Activated naive CD8-positive, alpha-beta T cell treated with anti-CD3 and anti-CD28 coated beads, Interleukin-2, amount 10 ng/mL, durations not matched to agents 7 days and 5 days (primary cell): ENCODE measurements at regions of chr1 and their contacts with region 1.

Region 1: DNA sequence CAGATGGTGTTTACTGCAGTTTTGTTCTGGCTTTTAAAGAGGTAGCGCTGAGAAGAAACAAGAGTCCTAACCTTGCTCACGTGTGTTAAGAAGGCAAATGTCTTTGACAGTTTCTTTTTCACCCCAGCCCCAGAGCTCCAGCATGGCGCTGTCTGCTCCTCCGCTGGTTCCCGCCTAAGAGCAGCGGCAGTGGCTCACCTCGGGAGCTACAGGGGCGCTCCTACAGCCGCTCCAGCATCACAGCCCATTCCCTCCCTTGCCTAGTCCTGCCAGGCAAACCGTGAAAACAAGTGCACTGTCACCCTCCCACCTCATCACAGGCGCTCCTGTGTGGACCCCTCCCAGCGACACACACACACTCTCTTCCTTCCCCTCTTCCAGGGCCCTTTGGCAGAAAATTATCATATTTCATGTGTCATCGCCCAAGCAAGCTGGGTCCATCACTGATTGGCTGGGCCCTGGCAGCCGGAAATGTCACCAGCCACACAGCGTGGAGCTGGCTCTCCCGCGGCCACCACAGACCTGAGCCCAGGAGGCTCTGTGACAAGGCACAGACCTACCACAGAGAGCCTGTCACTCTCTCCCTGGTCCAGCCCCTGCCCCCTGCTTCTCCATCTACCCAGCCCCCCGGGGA is 1.2 kb upstream of the HIVEP3 start:
- DNase-seq: peak; percentile 84
- ATAC-seq: peak; percentile 96
- H3K4me3 Mint-ChIP-seq: peak overlapping the region; percentile 96
- H3K27ac Mint-ChIP-seq: peak overlapping the region; percentile 97
- H3K4me1 Mint-ChIP-seq: peaks cover 47% of the 10 kb centered on the region
- H3K27me3 Mint-ChIP-seq: no peaks in the 10 kb centered on the region

Region 2: DNA sequence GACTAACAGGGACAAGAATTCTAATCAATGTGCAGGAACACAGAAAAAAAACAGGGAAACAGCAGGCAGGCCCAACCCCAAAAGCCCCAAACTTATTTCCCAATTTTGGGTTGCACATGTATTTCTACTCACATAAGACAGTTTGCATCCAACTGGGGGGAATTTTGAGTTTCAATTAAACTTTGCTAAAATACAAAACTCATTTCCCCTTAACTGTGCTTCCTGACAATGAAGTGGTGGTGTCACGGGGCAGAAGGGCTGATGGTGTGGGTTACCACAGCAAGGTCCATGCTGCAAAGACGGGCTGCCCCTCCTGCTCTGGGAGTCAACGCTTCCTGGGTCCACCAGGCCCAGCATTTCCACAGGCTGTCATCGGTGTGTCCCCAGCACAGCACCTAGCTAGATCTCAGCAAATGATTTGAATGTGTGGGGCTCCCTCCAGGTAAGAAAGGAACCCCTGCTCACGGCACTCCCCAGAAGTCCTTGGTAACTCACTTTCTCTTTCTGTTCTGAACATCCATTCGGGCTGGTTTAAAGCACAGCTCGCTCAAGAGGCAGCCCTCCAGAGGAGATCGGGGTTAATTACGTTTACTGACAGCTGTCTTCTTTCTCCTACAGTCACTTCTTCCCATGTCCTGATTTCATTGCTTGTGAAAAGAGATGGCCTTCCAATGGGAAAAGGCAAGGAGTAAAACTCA is 28.5 kb before region 1 on chr1:
- POLR2A ChIA-PET with region 1: interaction called, 98 read pairs
- DNase-seq: peak; percentile 75
- ATAC-seq: peak; percentile 94
- H3K4me3 Mint-ChIP-seq: peak overlapping the region; percentile 89
- H3K27ac Mint-ChIP-seq: peak overlapping the region; percentile 97
- H3K4me1 Mint-ChIP-seq: peaks cover 53% of the 10 kb centered on the region
- H3K27me3 Mint-ChIP-seq: no peaks in the 10 kb centered on the region

Region 3: GRCh38 chr1:41898191-41898713 is 21.6 kb before region 1 on chr1:
- POLR2A ChIA-PET with region 1: interaction called, 98 read pairs
- DNase-seq: peak; percentile 64
- ATAC-seq: peak; percentile 96
- H3K4me3 Mint-ChIP-seq: peak overlapping the region; percentile 80
- H3K27ac Mint-ChIP-seq: peak overlapping the region; percentile 96
- H3K4me1 Mint-ChIP-seq: peaks cover 72% of the 10 kb centered on the region
- H3K27me3 Mint-ChIP-seq: no peaks in the 10 kb centered on the region